Endothelial cell of umbilical vein (primary cell): ENCODE measurements at regions of chr2 and their contacts with region 1.

Region 1: DNA sequence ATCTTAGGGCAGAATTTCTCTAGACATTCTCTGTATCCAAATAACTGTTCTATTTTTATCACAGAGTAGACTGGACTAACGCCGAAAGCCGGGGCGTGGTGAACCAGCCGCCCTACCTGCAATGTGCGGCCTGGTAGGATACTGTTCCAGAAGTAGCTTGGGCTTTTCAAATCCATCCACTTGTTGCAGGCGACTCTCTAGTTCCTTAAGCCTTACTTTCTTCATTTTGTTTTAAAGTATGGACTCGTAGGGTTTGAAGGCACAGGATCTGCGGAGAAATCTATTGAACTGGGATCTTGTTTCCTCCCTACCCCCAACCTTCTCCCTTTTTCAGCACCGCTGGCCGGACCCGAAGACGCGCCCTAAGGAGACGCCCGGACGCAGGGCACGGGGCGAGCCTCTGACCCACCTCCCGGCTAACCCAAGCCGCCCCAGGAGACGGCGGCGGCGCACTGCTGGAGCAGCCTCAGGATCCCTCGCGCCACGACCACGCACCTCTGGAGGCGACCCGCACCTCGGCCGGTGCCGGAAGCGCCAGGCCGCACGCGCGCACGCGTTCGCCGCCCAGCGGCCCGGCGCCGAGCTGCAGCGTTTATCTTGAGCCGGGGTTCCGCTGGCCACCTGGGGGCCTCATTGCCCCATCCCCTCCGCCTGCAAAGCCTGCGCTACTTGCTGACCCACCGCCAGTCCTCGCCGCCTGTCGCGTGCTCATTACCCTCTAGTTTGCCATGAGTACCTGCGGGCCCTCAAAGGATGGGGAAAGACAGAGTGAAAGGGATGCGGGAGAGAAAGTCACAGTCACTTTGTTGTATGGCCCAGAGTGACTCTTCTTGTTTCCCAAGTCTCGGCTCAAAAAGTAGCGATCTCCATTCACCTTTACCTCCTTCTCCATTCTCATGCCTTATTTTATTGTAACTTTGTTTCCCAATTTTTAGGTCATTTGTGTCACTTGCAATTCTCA is at the start of gene METTL5:
- DNase-seq: peak; percentile 80
- H3K4me3 ChIP-seq: peak within 1 kb of the TSS; percentile 67 to 90 (median 85)
- H3K27ac ChIP-seq: peak within 1 kb of the TSS; percentile 44
- H3K4me1 ChIP-seq: peaks cover 21% of the 10 kb centered on the region
- H3K27me3 ChIP-seq: no peaks in the 10 kb centered on the region
- CTCF ChIP-seq: peak; percentile 88 to 95
- POLR2A ChIP-seq: peak; percentile 75
- total RNA-seq, gene METTL5: 50.4 and 52.0 TPM in 2 replicates

Region 2: DNA sequence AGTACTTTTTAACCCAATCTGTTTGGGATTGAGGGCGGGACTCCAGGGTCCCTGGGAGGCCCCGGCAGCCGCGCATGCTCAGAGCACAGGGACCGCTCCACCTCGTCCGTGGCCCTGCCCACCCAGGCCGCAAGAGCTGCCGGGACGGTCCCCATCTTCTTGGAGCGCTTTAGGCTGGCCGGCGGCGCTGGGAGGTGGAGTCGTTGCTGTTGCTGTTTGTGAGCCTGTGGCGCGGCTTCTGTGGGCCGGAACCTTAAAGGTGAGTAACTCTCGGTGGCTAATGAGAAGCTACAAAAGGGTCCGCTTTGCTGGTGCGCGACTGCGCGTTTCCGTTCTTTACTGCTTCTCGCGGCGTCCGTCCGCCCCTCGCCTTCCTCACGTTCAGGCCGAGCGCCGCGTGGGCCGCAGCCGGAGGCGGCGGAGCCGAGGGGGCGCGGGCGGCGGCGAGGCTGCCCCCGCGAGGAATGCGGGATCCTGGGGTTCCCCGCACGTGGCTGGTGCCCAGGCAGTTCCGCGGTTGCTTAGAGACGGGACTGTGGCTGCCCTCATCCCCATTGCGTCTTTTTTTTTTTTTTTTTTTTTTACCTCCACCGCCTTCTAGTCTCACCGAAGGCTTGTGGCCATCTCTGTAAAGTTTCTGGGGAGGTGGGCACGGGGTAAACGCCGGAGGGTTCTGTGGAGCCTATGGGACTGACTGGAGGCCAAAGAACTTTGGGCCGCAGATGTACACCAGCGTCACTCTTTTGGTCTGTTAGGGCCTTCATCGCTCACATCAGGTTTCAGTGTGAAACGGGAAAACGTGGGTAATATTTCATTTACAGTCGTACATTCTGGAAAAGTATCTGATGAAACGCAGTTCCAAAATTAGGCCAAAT is 25.7 kb before region 1 on chr2 and contains the start of gene SSB:
- CTCF ChIA-PET with region 1: interaction called, 6 read pairs
- POLR2A ChIA-PET with region 1: interaction called, 4 read pairs
- dilution Hi-C with region 1: no loop called
- intact Hi-C with region 1: loop called (anchors 1 kb)
- DNase-seq: peak; percentile 93
- H3K4me3 ChIP-seq: peak within 1 kb of the TSS; percentile 91 to 99 (median 97)
- H3K27ac ChIP-seq: peak within 1 kb of the TSS; percentile 64
- H3K4me1 ChIP-seq: peaks cover 14% of the 10 kb centered on the region
- H3K27me3 ChIP-seq: no peaks in the 10 kb centered on the region
- CTCF ChIP-seq: no peak
- POLR2A ChIP-seq: peak; percentile 96
- total RNA-seq, gene SSB: 124 and 125 TPM in 2 replicates

Region 3: GRCh38 chr2:169871994-169872393 is 47.3 kb after region 1 on chr2:
- CTCF ChIA-PET with region 1: interaction called, 11 read pairs
- POLR2A ChIA-PET with region 1: no interaction called
- dilution Hi-C with region 1: no loop called
- intact Hi-C with region 1: loop called (anchors 5 kb)
- DNase-seq: no peak
- H3K4me3 ChIP-seq: no peak overlapping the region
- H3K27ac ChIP-seq: no peak overlapping the region
- H3K4me1 ChIP-seq: no peaks in the 10 kb centered on the region
- H3K27me3 ChIP-seq: no peaks in the 10 kb centered on the region
- CTCF ChIP-seq: no peak
- POLR2A ChIP-seq: no peak

Region 4: DNA sequence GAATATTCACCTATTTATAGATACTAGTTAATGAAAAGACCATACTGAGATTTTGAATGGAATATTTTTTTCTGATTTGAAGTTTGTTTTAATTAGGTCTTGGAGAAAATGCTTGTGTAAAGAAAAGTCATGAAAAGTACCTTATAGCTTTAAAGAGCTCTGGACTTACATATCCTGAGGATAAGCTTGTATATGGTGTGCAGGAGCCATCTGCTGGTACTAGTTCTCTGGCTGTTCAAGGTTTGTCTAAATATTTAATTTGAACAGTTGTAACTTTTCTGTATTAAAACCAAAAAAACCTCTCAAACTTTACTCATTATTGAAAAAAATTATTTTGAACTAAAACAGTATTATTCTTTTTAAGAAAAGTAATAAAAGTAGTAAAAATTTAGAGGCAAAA is 52.7 kb after region 1 on chr2:
- CTCF ChIA-PET with region 1: interaction called, 11 read pairs
- POLR2A ChIA-PET with region 1: no interaction called
- dilution Hi-C with region 1: no loop called
- intact Hi-C with region 1: loop called (anchors 5 kb)
- DNase-seq: peak; percentile 31
- H3K4me3 ChIP-seq: no peak overlapping the region
- H3K27ac ChIP-seq: no peak overlapping the region
- H3K4me1 ChIP-seq: no peaks in the 10 kb centered on the region
- H3K27me3 ChIP-seq: no peaks in the 10 kb centered on the region
- CTCF ChIP-seq: peak in 1 of 2 donors; percentile 17
- POLR2A ChIP-seq: no peak

Region 5: DNA sequence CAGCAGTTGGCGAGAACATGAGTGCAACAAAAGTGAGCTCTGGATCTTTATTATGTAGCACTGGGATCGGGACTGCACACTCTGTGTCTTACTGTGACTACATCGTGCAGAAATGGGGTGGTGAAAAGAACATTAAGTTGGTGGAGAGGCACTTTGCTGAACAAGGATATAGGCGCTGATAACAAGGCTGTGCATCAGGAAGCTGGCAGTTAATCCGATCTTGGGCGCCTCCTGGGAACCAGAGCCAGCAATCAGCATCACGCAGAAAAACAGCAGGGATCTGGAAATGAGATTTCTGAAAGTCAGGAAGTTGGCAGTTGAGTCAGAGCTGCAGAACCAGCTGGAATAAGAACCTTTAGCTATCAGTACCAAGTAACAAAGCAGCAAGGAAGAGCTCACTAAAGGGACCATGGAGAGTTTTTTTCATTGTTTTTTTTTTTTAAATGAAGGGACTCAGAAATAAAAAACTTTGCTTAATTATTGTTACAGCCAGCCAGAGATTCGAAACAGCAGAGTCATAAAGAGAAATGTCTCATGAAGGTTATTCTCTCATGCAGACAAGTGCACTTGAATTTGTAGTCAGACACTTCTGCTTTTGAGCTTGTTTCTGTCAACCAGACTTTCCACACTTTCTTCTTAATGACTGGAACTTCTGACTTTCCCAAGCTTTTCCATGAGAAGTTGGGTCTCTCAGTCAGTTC is 330.5 kb after region 1 on chr2:
- CTCF ChIA-PET with region 1: no interaction called
- POLR2A ChIA-PET with region 1: no interaction called
- dilution Hi-C with region 1: no loop called
- intact Hi-C with region 1: loop called (anchors 5 kb)
- DNase-seq: peak; percentile 95
- H3K4me3 ChIP-seq: peak overlapping the region in 1 of 3 experiments; percentile 8
- H3K27ac ChIP-seq: peak overlapping the region; percentile 69
- H3K4me1 ChIP-seq: peaks cover 28% of the 10 kb centered on the region
- H3K27me3 ChIP-seq: no peaks in the 10 kb centered on the region
- CTCF ChIP-seq: no peak
- POLR2A ChIP-seq: peak; percentile 27